GM12878 (cell line): ENCODE measurements at regions of chr15 and their contacts with region 1.

Region 1: DNA sequence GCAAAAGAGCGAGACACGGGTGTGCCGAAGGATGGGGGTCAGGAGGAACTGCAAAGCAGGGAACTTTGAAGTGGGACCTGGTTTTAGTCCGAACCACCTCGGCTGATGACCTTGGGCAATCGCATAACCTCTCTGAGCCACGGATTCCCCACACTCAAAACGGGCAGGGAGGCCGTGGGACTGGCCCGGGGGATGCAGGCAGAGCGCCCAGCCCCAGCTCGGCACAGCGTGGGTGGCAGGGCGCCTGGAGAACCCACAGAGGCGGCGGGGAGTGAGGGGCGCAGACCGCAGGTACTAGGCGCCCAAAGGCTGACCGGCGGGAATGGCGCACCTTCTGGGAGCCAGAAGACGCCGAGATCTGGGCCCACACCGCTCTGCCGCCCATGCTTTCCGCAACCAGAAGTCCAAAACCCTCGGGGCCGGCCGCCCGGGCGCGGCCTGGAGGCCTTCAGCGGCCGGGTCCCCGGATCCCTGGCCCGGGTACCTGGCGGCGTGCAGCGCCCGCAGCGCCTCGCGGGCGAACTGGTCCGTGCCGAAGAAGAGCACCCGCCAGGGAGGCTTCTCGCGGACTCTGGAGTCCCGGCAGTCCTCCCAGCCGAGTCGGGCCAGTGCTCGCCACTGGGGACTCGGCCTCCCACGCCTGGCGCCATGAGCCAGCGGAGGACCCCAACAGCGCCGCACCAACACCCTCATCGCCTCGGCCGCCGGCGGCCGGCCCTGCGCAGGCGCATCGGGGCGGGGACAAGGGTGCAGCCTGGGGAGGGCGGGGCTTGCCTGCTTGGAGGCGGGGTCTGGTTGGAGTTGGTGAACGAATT is at the start of gene MTFMT:
- DNase-seq: no peak
- ATAC-seq: peak; percentile 96
- H3K4me3 ChIP-seq: peak within 1 kb of the TSS; percentile 95
- H3K27ac ChIP-seq: peak within 1 kb of the TSS; percentile 60
- H3K4me1 ChIP-seq: peaks cover 11% of the 10 kb centered on the region
- H3K27me3 ChIP-seq: no peaks in the 10 kb centered on the region
- CTCF ChIP-seq: no peak
- EP300 ChIP-seq: no peak
- POLR2A ChIP-seq: peak; percentile 94
- RAD21 ChIP-seq: no peak
- polyA plus RNA-seq, gene MTFMT: 1.7 to 3.3 TPM

Region 2: DNA sequence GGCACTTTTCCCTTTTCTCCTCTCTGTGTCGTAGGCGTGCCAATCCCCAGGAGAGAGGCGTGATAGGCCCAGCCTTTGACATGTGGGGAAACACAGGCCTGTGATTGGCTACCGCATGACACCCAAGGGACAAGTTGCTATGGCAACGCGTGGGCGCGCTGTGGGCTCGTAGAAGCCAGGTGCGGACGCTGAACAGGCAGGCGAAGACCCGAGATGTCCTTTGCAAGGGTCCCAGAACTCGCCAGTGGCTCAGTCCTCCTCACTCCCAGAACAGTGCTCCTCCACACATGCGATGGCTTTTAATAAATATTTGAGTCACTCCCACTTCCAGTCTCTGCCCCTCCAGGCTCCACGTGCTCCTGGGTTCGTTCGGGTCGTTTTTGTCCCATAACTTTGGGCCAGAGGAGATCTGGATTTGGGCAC is 20.3 kb after region 1 on chr15:
- CTCF ChIA-PET with region 1: interaction called, 38 read pairs
- POLR2A ChIA-PET with region 1: interaction called, 6 read pairs
- RAD21 ChIA-PET with region 1: interaction called, 20 read pairs
- SMC1A ChIA-PET with region 1: interaction called, 28 read pairs
- in situ Hi-C with region 1: no loop called
- intact Hi-C with region 1: no loop called
- DNase-seq: peak; percentile 90
- ATAC-seq: peak; percentile 97
- H3K4me3 ChIP-seq: peak overlapping the region; percentile 53; the same call in 1 of the 2 replicates
- H3K27ac ChIP-seq: no peak overlapping the region
- H3K4me1 ChIP-seq: peaks cover 8% of the 10 kb centered on the region
- H3K27me3 ChIP-seq: no peaks in the 10 kb centered on the region
- CTCF ChIP-seq: no peak
- EP300 ChIP-seq: no peak
- POLR2A ChIP-seq: no peak
- RAD21 ChIP-seq: no peak

Region 3: GRCh38 chr15:65060641-65061397 is 31.7 kb after region 1 on chr15:
- CTCF ChIA-PET with region 1: interaction called, 38 read pairs
- POLR2A ChIA-PET with region 1: no interaction called
- RAD21 ChIA-PET with region 1: interaction called, 15 read pairs
- SMC1A ChIA-PET with region 1: interaction called, 5 read pairs
- in situ Hi-C with region 1: no loop called
- intact Hi-C with region 1: no loop called
- DNase-seq: no peak
- ATAC-seq: no peak
- H3K4me3 ChIP-seq: no peak overlapping the region
- H3K27ac ChIP-seq: no peak overlapping the region
- H3K4me1 ChIP-seq: no peaks in the 10 kb centered on the region
- H3K27me3 ChIP-seq: no peaks in the 10 kb centered on the region; a peak in 2 of 4 replicates
- CTCF ChIP-seq: no peak
- EP300 ChIP-seq: no peak
- POLR2A ChIP-seq: no peak
- RAD21 ChIP-seq: no peak

Region 4: DNA sequence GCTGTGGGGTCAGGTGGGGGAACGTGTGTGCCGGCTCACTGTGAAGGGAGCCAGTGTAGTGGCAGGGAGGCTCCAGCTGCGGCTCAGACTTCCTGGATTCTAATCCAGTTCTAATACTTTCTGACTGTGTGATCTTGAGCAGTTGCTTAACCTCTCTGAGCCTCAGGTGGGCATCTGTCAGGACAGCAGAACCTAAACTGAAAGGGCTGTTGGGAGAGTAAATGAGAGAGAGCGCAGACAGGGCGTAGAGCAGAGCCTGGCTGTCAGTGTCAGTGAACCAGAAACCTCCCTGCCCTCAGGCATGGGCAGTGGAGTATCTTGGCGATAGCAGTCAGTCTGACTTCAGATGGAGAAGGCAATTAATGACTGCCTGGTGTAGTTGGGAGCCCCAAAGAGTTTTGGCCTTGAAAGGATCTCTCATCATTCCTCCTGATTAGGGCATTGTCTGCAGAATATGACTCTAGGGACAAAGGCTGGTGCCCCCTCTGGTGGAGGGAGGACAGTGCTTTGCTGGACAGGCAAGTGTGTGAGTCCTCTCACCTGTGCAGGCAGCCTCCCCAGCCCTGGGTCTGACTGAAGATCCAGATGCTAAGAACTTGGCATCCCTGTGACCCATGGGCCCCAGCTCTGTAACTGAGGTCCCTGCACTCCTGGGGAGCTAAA is 57.0 kb after region 1 on chr15:
- CTCF ChIA-PET with region 1: interaction called, 14 read pairs
- POLR2A ChIA-PET with region 1: no interaction called
- RAD21 ChIA-PET with region 1: interaction called, 4 read pairs
- SMC1A ChIA-PET with region 1: interaction called, 5 read pairs
- in situ Hi-C with region 1: no loop called
- intact Hi-C with region 1: no loop called
- DNase-seq: no peak
- ATAC-seq: peak; percentile 83
- H3K4me3 ChIP-seq: no peak overlapping the region
- H3K27ac ChIP-seq: no peak overlapping the region
- H3K4me1 ChIP-seq: no peaks in the 10 kb centered on the region
- H3K27me3 ChIP-seq: peaks cover 0 to 6% of the 10 kb centered on the region in 2 experiments; a peak in 1 of 4 replicates
- CTCF ChIP-seq: peak; percentile 40 to 51 (median 45)
- EP300 ChIP-seq: no peak
- POLR2A ChIP-seq: no peak
- RAD21 ChIP-seq: peak; percentile 55

Region 5: DNA sequence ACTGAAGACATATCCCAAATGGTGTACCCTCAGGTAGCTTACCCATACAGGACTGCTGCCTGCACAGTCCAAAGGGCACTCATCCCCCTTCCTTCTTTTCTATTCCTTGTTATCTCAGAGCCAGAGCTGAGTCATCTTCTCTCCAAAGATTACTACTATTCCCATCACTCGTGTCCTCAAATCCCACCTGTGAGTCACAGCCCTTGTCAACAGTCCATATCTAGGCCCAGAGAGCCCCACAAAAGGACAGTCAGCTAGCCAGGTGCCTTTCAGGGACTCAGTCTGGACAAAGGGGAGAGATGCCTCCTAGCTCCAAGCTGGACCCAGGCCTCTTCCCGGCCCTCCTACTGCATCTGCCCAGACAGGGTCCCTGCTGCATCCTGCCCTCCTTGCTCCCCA is 246.6 kb after region 1 on chr15:
- CTCF ChIA-PET with region 1: interaction called, 7 read pairs
- POLR2A ChIA-PET with region 1: no interaction called
- RAD21 ChIA-PET with region 1: interaction called, 7 read pairs
- SMC1A ChIA-PET with region 1: interaction called, 3 read pairs
- in situ Hi-C with region 1: no loop called
- intact Hi-C with region 1: loop called (anchors 1 kb)
- DNase-seq: no peak
- ATAC-seq: no peak
- H3K4me3 ChIP-seq: no peak overlapping the region
- H3K27ac ChIP-seq: no peak overlapping the region
- H3K4me1 ChIP-seq: no peaks in the 10 kb centered on the region
- H3K27me3 ChIP-seq: no peaks in the 10 kb centered on the region
- CTCF ChIP-seq: no peak
- EP300 ChIP-seq: no peak
- POLR2A ChIP-seq: no peak
- RAD21 ChIP-seq: no peak